ENCODE measurements at regions of chr3 and their contacts with region 1.

Region 1: GRCh38 chr3:32334675-32335074 is 57.0 kb upstream of the CMTM7 start:
- DNase-seq: no peak
- ATAC-seq: no peak

Region 2: GRCh38 chr3:32177702-32178198 is 156.9 kb before region 1 on chr3:
- intact Hi-C with region 1: loop called (anchors 5 kb)
- DNase-seq: no peak
- ATAC-seq: peak; percentile 94